Endothelial cell of umbilical vein (primary cell): ENCODE measurements at regions of chr19 and their contacts with region 1.

Region 1: GRCh38 chr19:49877020-49877878 is at the starts of genes AKT1S1 and TBC1D17:
- DNase-seq: peak; percentile 100
- H3K4me3 ChIP-seq: peak within 1 kb of the TSS; percentile 38 to 81 (median 70)
- H3K27ac ChIP-seq: peak within 1 kb of the TSS; percentile 84
- H3K4me1 ChIP-seq: peaks cover 14% of the 10 kb centered on the region
- H3K27me3 ChIP-seq: no peaks in the 10 kb centered on the region
- CTCF ChIP-seq: no peak
- POLR2A ChIP-seq: peak; percentile 84
- total RNA-seq, gene AKT1S1: 61.9 and 64.2 TPM in 2 replicates
- total RNA-seq, gene TBC1D17: 36.1 and 39.3 TPM in 2 replicates

Region 2: DNA sequence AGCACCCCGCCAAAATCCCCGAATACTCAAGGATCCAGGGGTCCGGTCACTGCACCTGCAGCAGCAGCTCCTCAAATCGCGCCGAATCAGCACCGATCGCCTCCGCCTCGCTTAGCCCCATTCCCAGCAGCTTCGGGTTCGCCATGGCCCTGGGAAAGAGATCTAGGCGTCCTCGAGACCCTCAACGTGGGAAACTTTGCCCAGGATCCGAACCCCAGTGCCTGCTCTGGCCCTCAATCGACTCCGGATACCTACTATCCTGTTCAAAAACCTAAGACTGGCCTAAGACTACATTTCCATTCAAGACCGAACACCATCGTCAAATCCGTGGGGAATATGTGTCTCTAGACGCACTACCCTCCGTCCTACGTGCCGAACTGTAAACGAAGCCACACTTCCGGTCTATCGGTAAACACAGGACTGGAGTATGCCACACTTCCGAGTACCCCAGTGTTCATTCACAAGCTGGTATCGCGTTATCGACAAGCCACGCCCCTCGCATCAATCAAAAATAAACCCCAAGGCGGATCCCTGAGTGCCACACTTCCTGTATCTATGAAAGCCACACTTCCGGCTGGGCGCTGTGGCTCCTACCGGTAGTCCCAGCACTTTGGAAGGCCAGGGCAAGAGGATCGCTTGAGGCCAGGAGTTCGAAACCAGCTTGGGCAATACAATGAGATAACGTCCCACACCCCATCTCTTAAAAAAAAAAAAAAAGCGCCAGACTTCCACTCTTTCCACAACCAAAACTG is 425.6 kb before region 1 on chr19 and contains the start of gene PIH1D1:
- CTCF ChIA-PET with region 1: no interaction called
- POLR2A ChIA-PET with region 1: no interaction called
- dilution Hi-C with region 1: no loop called
- intact Hi-C with region 1: loop called (anchors 5 kb)
- DNase-seq: peak; percentile 99
- H3K4me3 ChIP-seq: peak within 1 kb of the TSS; percentile 43 to 84 (median 80)
- H3K27ac ChIP-seq: peak within 1 kb of the TSS; percentile 83
- H3K4me1 ChIP-seq: peaks cover 11% of the 10 kb centered on the region
- H3K27me3 ChIP-seq: no peaks in the 10 kb centered on the region
- CTCF ChIP-seq: no peak
- POLR2A ChIP-seq: peak; percentile 93
- total RNA-seq, gene PIH1D1: 84.1 and 86.9 TPM in 2 replicates

Region 3: GRCh38 chr19:49817964-49818648 is 59.1 kb before region 1 on chr19 and contains the start of gene MED25:
- CTCF ChIA-PET with region 1: no interaction called
- POLR2A ChIA-PET with region 1: no interaction called
- dilution Hi-C with region 1: no loop called
- intact Hi-C with region 1: loop called (anchors 2 kb)
- DNase-seq: peak; percentile 93
- H3K4me3 ChIP-seq: peak within 1 kb of the TSS; percentile 83 to 95 (median 90)
- H3K27ac ChIP-seq: peak within 1 kb of the TSS; percentile 89
- H3K4me1 ChIP-seq: peaks cover 19% of the 10 kb centered on the region
- H3K27me3 ChIP-seq: no peaks in the 10 kb centered on the region
- CTCF ChIP-seq: peak in 1 of 2 donors; percentile 14
- POLR2A ChIP-seq: peak; percentile 75
- total RNA-seq, gene MED25: 55.8 and 62.9 TPM in 2 replicates

Region 4: DNA sequence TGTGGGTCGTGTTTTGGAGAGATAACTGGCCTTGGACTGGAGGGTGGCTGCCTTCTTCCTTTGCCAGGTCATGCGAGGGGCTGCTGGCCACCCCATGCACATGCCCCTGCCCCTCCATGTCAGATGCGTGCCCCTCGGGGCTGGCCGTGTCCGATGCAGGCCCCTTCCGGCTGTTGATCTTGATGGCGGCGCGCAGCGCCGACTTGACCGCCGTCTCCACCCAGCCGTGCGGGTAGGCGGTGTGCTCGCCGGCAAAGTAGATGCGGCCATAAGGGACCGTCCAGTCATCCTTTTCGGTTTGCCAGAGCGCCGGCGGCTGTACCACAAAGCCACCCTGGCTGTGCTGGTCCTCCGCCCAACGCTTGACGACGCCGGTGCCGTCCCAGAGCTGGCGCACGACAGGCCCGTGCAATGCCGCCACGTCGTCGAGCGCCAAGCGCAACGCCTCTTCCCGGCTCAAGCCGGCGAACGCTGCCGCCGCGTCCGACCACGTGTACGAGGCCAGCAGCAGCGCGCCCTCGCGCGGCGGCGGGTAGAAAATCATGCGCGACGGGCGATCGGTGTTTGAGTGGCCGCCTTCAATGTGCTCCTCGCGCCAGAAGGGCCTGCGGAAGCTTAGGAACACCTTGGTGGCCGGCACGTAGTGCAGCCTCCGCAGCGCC is 12.6 kb after region 1 on chr19:
- CTCF ChIA-PET with region 1: interaction called, 3 read pairs
- POLR2A ChIA-PET with region 1: no interaction called
- dilution Hi-C with region 1: no loop called
- intact Hi-C with region 1: loop called (anchors 1 kb)
- DNase-seq: peak; percentile 79
- H3K4me3 ChIP-seq: no peak overlapping the region
- H3K27ac ChIP-seq: no peak overlapping the region
- H3K4me1 ChIP-seq: peaks cover 3% of the 10 kb centered on the region
- H3K27me3 ChIP-seq: no peaks in the 10 kb centered on the region
- CTCF ChIP-seq: peak; percentile 92 to 93
- POLR2A ChIP-seq: no peak

Region 5: DNA sequence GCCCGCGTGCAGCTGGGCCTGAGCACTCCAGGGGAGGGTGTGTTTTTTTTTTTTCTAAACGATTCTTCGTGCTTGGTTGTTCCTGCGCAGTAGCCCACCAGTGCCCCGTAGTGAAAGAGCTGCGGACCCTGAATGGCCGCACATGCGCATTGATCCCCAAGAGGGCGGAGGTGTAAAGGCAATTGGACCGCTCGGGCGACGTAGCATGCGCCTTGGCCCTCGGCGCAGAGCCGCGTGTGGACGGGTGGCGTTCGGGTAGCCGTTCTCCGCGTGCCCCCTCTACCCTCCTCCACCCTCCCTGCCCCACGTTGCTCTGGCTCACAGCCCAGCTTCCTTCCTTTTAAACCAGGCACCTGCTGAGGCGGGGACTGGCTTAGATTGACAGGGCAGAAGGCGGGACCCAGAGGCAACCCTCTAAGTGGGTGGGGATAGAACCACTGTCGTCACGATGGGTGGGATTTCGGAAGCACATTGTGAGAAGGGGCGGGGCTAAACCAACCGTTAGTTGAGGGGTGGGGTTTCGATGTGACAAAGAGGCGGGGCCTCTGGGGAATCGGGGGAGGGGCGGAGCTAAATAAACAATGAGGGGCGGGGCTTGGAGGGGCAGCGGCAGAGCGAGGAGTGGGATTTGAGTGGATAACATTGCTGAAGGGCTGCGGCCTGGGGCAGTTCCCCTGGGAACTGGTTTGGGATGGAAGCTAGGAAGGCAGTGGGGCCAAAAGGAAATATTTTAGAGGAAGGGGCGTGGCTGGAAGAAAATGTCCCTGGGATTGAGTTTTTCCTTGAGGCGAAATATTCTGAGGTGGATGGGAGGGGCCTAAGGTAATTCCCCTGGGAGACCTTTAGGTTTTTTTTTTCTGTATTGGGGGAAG is 52.6 kb after region 1 on chr19:
- CTCF ChIA-PET with region 1: no interaction called
- POLR2A ChIA-PET with region 1: interaction called, 6 read pairs
- dilution Hi-C with region 1: no loop called
- intact Hi-C with region 1: loop called (anchors 1 kb)
- DNase-seq: peak; percentile 99
- H3K4me3 ChIP-seq: peak overlapping the region; percentile 6 to 99 (median 91)
- H3K27ac ChIP-seq: peak overlapping the region; percentile 79
- H3K4me1 ChIP-seq: peaks cover 10% of the 10 kb centered on the region
- H3K27me3 ChIP-seq: no peaks in the 10 kb centered on the region
- CTCF ChIP-seq: no peak
- POLR2A ChIP-seq: peak; percentile 80

Region 6: DNA sequence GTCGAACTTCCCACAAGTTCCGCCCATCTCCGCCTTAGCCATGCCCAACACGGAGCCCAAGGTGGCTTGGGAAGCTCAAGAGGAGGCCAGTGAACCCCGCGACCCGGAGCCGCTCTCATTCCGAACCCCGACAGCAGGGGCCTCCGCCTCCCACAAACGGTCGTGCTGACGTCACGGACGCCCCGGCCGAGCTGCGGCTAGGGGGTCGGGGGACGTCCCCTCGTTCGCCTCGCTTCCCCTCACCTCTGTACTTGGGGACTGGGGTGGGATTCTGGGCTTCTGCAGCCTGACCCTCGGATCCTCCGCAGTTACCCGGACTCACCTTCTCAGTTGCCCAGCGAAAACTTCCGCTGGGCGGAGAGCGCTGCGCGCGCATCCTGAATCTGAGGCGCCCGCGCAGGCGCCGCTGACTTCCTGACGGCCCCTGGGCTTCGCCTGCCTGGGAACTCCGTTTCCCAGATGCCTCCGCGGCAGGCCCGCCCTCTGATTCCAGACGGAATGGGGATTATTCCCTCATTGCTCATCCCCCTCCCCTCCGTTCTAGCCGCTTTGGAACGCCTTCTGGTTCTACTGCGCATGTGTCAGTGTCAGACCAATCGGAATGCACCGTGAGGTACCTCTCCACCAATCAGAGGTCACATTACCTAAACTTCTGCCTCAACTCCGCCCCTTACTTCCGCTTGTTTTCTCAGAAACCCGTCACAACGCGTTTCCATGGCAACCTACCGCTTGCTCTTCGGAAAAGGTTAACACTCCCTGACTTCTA is 148.0 kb after region 1 on chr19 and contains the start of gene VRK3:
- CTCF ChIA-PET with region 1: no interaction called
- POLR2A ChIA-PET with region 1: no interaction called
- dilution Hi-C with region 1: no loop called
- intact Hi-C with region 1: loop called (anchors 1 kb)
- DNase-seq: peak; percentile 100
- H3K4me3 ChIP-seq: peak within 1 kb of the TSS; percentile 60 to 82 (median 82)
- H3K27ac ChIP-seq: peak within 1 kb of the TSS; percentile 92
- H3K4me1 ChIP-seq: peaks cover 7% of the 10 kb centered on the region
- H3K27me3 ChIP-seq: no peaks in the 10 kb centered on the region
- CTCF ChIP-seq: peak in 1 of 2 donors; percentile 9
- POLR2A ChIP-seq: peak; percentile 88
- total RNA-seq, gene VRK3: 36.0 and 37.4 TPM in 2 replicates

Region 7: GRCh38 chr19:50383852-50384684 is 506.8 kb after region 1 on chr19 and contains the start of gene POLD1:
- CTCF ChIA-PET with region 1: no interaction called
- POLR2A ChIA-PET with region 1: no interaction called
- dilution Hi-C with region 1: no loop called
- intact Hi-C with region 1: loop called (anchors 1 kb)
- DNase-seq: peak; percentile 99
- H3K4me3 ChIP-seq: peak within 1 kb of the TSS; percentile 71 to 94 (median 80)
- H3K27ac ChIP-seq: peak within 1 kb of the TSS; percentile 63
- H3K4me1 ChIP-seq: peaks cover 16% of the 10 kb centered on the region
- H3K27me3 ChIP-seq: no peaks in the 10 kb centered on the region
- CTCF ChIP-seq: no peak
- POLR2A ChIP-seq: peak; percentile 79
- total RNA-seq, gene POLD1: 63.9 and 73.8 TPM in 2 replicates